Heart right ventricle (tissue), 16 donors: ENCODE measurements at regions of chr18 and their contacts with region 1.

Region 1: DNA sequence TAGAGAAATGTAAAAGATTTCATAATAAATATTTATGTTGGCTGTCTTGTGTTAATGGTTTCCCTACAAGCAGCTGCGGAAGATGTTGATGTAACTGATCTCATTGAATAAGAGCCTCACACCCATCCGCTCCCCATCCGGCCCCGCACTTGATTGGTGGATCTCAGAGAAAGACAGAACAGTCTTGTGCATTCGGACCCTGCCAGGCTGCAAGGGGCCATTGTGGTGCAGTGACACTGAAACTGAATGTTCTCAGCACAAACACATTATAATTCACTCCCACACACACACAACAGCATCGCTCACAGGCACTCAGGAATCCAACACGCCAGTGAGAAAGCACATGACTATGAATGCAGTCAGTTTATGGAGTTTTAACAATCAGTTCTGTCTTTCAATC is 47.8 kb downstream of the PRELID3A start:
- DNase-seq: no peak
- ATAC-seq: peak in 1 of 8 donors; percentile 39
- H3K4me3 ChIP-seq: no peak overlapping the region
- H3K27ac ChIP-seq: no peak overlapping the region
- H3K4me1 ChIP-seq: peaks cover 0 to 3% (median 0%) of the 10 kb centered on the region in 9 donors
- H3K27me3 ChIP-seq: no peaks in the 10 kb centered on the region
- CTCF ChIP-seq: no peak

Region 2: DNA sequence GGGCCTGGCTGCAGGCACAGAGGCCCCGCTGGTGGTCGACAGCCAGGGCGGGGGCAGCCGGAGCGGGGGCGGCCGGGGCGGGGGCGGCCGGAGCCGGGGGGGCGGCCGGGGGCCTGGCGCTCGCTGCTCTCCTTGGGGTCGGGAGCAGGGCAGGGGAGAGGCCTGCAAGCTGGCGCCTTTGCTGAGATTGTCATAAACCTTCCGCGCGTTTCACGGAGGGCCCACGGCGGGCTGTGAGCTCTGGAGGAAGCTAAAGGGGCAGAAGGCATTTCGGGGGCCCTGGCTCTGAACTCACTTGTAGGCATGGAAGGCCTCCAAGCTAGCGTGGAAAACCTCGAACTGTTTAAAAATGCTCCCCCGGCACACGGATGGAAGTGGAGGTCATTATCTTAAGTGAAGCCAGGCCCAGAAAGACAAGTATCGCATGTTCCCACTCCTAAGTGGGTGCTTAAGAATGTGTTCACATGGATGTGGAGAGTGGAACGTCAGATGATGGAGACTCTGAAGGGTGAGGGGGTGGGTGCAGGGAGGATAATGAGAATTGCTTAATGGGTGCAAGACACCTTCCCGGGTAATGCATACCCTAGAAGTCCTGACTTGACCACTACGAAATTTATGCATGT is 47.1 kb before region 1 on chr18:
- intact Hi-C with region 1: loop called in 1 of 10 experiments (anchors 10 kb)
- DNase-seq: no peak
- ATAC-seq: peak in 1 of 8 donors; percentile 7
- H3K4me3 ChIP-seq: peak overlapping the region; percentile 30 to 71 (median 62)
- H3K27ac ChIP-seq: peak overlapping the region; percentile 49 to 88 (median 82)
- H3K4me1 ChIP-seq: peaks cover 0 to 23% (median 15%) of the 10 kb centered on the region in 9 donors
- H3K27me3 ChIP-seq: peaks cover 0 to 32% (median 10%) of the 10 kb centered on the region in 7 donors
- CTCF ChIP-seq: no peak